CD8-positive, alpha-beta T cell (primary cell): ENCODE measurements at regions of chr21 and their contacts with region 1.

Region 1: GRCh38 chr21:36385233-36386030 is at the start of gene CHAF1B:
- DNase-seq: peak; percentile 62 to 88 (median 79)
- ATAC-seq: peak; percentile 98
- H3K4me3 ChIP-seq: peak within 1 kb of the TSS; percentile 63 to 66
- H3K4me3 Mint-ChIP-seq: peak within 1 kb of the TSS; percentile 86
- H3K27ac ChIP-seq: peak within 1 kb of the TSS in 1 of 2 experiments; percentile 37
- H3K27ac Mint-ChIP-seq: peak within 1 kb of the TSS; percentile 55
- H3K4me1 ChIP-seq: peaks cover 6% of the 10 kb centered on the region
- H3K4me1 Mint-ChIP-seq: peaks cover 7% of the 10 kb centered on the region
- H3K27me3 ChIP-seq: no peaks in the 10 kb centered on the region
- H3K27me3 Mint-ChIP-seq: no peaks in the 10 kb centered on the region
- CTCF ChIP-seq: no peak
- total RNA-seq, gene CHAF1B: 2.0 to 3.9 TPM

Region 2: DNA sequence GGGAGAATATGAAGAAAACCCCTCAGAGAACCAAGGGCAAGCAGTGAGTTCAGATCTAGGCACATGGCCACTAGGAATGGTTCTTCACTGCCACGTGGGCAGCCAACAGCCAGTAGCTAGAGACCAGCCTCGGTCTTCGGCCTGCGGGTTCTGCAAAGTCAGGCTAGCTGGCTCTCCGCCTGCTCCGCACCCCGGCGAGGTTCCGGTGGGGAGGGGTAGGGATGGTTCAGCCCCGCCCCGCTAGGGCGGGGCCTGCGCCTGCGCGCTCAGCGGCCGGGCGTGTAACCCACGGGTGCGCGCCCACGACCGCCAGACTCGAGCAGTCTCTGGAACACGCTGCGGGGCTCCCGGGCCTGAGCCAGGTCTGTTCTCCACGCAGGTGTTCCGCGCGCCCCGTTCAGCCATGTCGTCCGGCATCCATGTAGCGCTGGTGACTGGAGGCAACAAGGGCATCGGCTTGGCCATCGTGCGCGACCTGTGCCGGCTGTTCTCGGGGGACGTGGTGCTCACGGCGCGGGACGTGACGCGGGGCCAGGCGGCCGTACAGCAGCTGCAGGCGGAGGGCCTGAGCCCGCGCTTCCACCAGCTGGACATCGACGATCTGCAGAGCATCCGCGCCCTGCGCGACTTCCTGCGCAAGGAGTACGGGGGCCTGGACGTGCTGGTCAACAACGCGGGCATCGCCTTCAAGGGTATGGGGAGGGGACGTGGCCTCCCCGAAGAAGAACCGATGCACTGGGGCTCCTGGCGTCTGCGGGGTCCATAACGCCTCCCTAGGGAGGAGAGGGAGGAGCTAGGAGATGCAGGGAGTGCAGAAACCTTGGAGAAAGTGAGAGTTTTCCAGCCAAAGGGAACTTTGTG is 315.5 kb before region 1 on chr21 and contains the start of gene CBR1:
- CTCF ChIA-PET with region 1: no interaction called
- POLR2A ChIA-PET with region 1: no interaction called
- intact Hi-C with region 1: loop called in 1 of 2 experiments (anchors 5 kb)
- DNase-seq: peak; percentile 69 to 94 (median 85)
- ATAC-seq: peak; percentile 98
- H3K4me3 ChIP-seq: peak within 1 kb of the TSS; percentile 59 to 77
- H3K4me3 Mint-ChIP-seq: peak within 1 kb of the TSS; percentile 88
- H3K27ac ChIP-seq: peak within 1 kb of the TSS; percentile 12 to 54
- H3K27ac Mint-ChIP-seq: peak within 1 kb of the TSS; percentile 73
- H3K4me1 ChIP-seq: peaks cover 28% of the 10 kb centered on the region
- H3K4me1 Mint-ChIP-seq: peaks cover 40% of the 10 kb centered on the region
- H3K27me3 ChIP-seq: no peaks in the 10 kb centered on the region
- H3K27me3 Mint-ChIP-seq: no peaks in the 10 kb centered on the region
- CTCF ChIP-seq: no peak
- total RNA-seq, gene CBR1: 4.5 to 5.0 TPM